ENCODE measurements at regions of chr1 and their contacts with region 1.

Region 1: DNA sequence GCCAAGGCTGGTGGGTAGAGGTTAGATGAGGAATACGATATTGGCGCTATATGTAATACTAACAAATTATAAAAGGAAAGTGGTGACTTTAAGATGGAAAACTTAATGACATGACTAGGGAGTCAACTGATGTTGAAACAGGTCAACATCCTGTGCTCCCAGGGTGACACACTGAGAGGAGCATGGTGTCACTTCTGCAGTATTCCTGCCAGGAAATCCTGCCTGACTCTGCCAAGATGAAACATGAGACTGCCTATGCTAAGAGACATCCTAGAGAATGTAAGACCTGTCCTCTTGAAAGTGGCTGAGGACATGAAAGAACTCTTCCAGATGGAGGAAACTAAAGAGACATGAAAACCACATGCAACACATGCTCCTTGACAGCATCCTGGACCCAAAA is 65.0 kb upstream of the KCND3 start:
- DNase-seq: no peak
- ATAC-seq: no peak
- H3K4me3 ChIP-seq: no peak overlapping the region
- H3K4me3 Mint-ChIP-seq: no peak overlapping the region
- H3K27ac ChIP-seq: no peak overlapping the region
- H3K27ac Mint-ChIP-seq: no peak overlapping the region
- H3K4me1 ChIP-seq: no peaks in the 10 kb centered on the region
- H3K4me1 Mint-ChIP-seq: no peaks in the 10 kb centered on the region
- H3K27me3 ChIP-seq: no peaks in the 10 kb centered on the region
- H3K27me3 Mint-ChIP-seq: peaks cover 10% of the 10 kb centered on the region
- CTCF ChIP-seq: no peak

Region 2: GRCh38 chr1:111909030-111909429 is 145.5 kb before region 1 on chr1:
- CTCF ChIA-PET with region 1: no interaction called
- POLR2A ChIA-PET with region 1: no interaction called
- intact Hi-C with region 1: no loop called
- DNase-seq: no peak
- ATAC-seq: no peak
- H3K4me3 ChIP-seq: no peak overlapping the region
- H3K4me3 Mint-ChIP-seq: no peak overlapping the region
- H3K27ac ChIP-seq: no peak overlapping the region
- H3K27ac Mint-ChIP-seq: no peak overlapping the region
- H3K4me1 ChIP-seq: no peaks in the 10 kb centered on the region
- H3K4me1 Mint-ChIP-seq: no peaks in the 10 kb centered on the region
- H3K27me3 ChIP-seq: peaks cover 3% of the 10 kb centered on the region in 2 experiments
- H3K27me3 Mint-ChIP-seq: peaks cover 40% of the 10 kb centered on the region
- CTCF ChIP-seq: no peak

Region 3: DNA sequence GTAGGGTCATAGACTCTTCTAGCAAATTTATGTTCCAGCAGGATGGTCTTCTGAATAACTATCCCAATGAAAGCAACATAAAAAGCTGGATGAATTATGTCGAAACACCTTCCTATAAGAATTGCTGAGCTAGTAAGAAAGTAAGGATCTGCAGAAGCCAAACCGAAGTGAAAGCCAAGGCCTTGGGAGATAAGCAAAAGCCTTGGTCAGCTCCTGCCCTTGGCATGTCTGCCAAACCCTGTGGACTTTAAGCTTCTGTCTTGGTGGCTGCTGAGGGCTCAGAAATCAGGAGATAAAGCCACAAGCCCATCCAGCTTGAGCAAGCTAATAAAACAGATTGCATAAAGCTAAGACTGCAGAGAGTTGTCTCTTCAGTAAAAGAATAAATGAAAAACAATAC is 16.2 kb after region 1 on chr1:
- CTCF ChIA-PET with region 1: no interaction called
- POLR2A ChIA-PET with region 1: no interaction called
- intact Hi-C with region 1: loop called in 1 of 2 experiments (anchors 2 kb)
- DNase-seq: no peak
- ATAC-seq: no peak
- H3K4me3 ChIP-seq: no peak overlapping the region
- H3K4me3 Mint-ChIP-seq: no peak overlapping the region
- H3K27ac ChIP-seq: no peak overlapping the region
- H3K27ac Mint-ChIP-seq: no peak overlapping the region
- H3K4me1 ChIP-seq: no peaks in the 10 kb centered on the region
- H3K4me1 Mint-ChIP-seq: no peaks in the 10 kb centered on the region
- H3K27me3 ChIP-seq: no peaks in the 10 kb centered on the region
- H3K27me3 Mint-ChIP-seq: peaks cover 22% of the 10 kb centered on the region
- CTCF ChIP-seq: no peak

Region 4: GRCh38 chr1:112369392-112370285 is 315.1 kb after region 1 on chr1:
- CTCF ChIA-PET with region 1: no interaction called
- POLR2A ChIA-PET with region 1: no interaction called
- intact Hi-C with region 1: no loop called
- DNase-seq: peak; percentile 71 to 87 (median 83)
- ATAC-seq: peak; percentile 100
- H3K4me3 ChIP-seq: no peak overlapping the region
- H3K4me3 Mint-ChIP-seq: no peak overlapping the region
- H3K27ac ChIP-seq: no peak overlapping the region
- H3K27ac Mint-ChIP-seq: no peak overlapping the region
- H3K4me1 ChIP-seq: no peaks in the 10 kb centered on the region
- H3K4me1 Mint-ChIP-seq: peaks cover 4% of the 10 kb centered on the region
- H3K27me3 ChIP-seq: peaks cover 0 to 4% of the 10 kb centered on the region in 2 experiments
- H3K27me3 Mint-ChIP-seq: peaks cover 42% of the 10 kb centered on the region
- CTCF ChIP-seq: peak; percentile 93